Activated naive CD4-positive, alpha-beta T cell treated with anti-CD3 and anti-CD28 coated beads, Interleukin-2, amount 10 ng/mL, durations not matched to agents 7 days and 5 days (primary cell): ENCODE measurements at regions of chr5 and their contacts with region 1.

Region 1: DNA sequence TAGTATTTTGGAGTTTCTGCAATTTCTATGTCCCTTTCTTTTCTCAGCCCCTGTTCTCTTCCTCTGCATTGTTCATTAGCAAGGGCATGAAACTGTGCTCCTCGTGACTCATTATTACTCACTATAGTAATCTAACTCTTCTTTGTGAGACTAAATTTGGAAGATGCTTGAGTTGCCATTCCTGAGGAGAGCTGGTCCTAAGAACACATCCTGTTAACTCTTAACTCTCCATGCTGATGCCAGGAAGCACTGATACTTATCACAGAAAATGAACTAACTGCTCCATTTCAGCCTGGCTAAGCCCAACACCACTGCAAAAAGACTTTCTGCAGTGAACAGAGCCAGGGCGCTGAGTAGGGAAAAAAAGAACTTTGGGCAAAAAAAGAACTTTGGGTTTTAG is 10.6 kb upstream of the CSNK1A1 start:
- DNase-seq: no peak
- H3K4me3 Mint-ChIP-seq: no peak overlapping the region
- H3K27ac Mint-ChIP-seq: no peak overlapping the region
- H3K4me1 Mint-ChIP-seq: peaks cover 30% of the 10 kb centered on the region
- H3K27me3 Mint-ChIP-seq: no peaks in the 10 kb centered on the region

Region 2: GRCh38 chr5:149367249-149367971 is 194.4 kb before region 1 on chr5:
- CTCF ChIA-PET with region 1: interaction called, 15 read pairs
- DNase-seq: peak; percentile 69
- H3K4me3 Mint-ChIP-seq: no peak overlapping the region
- H3K27ac Mint-ChIP-seq: peak overlapping the region; percentile 60
- H3K4me1 Mint-ChIP-seq: peaks cover 6% of the 10 kb centered on the region
- H3K27me3 Mint-ChIP-seq: no peaks in the 10 kb centered on the region

Region 3: GRCh38 chr5:149434162-149435014 is 127.5 kb before region 1 on chr5:
- CTCF ChIA-PET with region 1: interaction called, 21 read pairs
- DNase-seq: peak; percentile 67
- H3K4me3 Mint-ChIP-seq: no peak overlapping the region
- H3K27ac Mint-ChIP-seq: no peak overlapping the region
- H3K4me1 Mint-ChIP-seq: peaks cover 25% of the 10 kb centered on the region
- H3K27me3 Mint-ChIP-seq: peaks cover 31% of the 10 kb centered on the region

Region 4: DNA sequence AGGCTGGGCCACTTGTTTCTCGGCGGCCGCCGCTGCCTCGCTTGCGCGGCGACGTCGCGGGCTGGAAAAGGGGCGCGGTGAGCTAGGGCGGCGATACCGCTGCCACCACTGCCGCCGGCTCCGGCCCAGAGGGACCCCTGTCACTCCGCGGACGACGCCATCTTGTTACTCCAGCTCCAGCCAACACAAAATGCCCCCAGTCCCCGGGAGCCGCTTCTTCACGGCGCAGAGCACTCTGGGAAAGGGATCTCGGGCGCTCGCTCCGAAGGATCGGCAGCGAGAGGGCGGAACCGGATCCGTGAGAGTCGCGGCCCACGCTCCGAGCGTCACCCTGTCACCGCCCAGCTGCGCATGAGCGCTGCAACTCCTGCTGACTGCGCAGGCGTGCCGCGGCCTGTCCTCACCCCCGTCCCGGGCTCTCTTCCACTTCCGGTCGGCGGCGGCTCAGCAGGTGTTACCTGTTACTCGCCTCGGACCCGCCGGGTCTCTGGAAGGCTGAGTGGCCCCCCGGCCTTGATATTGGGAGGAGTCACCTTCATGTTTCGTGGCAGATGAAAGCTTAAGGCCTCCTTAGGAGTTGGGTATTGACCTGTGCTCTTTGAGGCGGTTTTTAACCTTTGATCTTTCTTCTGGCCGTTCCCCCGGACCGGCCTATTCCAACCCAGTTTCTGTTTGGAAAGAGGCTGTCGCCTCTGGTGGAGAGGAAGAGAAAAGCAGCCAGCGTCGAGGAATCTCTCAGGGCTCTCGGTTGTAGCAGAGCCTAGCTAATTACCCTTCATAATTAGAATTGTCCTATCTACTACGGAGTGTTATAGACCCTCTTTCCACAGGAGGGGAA is 10.4 kb before region 1 on chr5 and contains the start of gene CSNK1A1:
- CTCF ChIA-PET with region 1: interaction called, 24 read pairs
- DNase-seq: peak; percentile 99
- H3K4me3 Mint-ChIP-seq: peak within 1 kb of the TSS; percentile 95
- H3K27ac Mint-ChIP-seq: peak within 1 kb of the TSS; percentile 97
- H3K4me1 Mint-ChIP-seq: peaks cover 36% of the 10 kb centered on the region
- H3K27me3 Mint-ChIP-seq: peaks cover 4% of the 10 kb centered on the region

Region 5: GRCh38 chr5:149618581-149619251 is 56.9 kb after region 1 on chr5:
- CTCF ChIA-PET with region 1: interaction called, 13 read pairs
- DNase-seq: peak; percentile 48
- H3K4me3 Mint-ChIP-seq: no peak overlapping the region
- H3K27ac Mint-ChIP-seq: no peak overlapping the region
- H3K4me1 Mint-ChIP-seq: no peaks in the 10 kb centered on the region
- H3K27me3 Mint-ChIP-seq: peaks cover 4% of the 10 kb centered on the region

Region 6: GRCh38 chr5:149702934-149703646 is 141.2 kb after region 1 on chr5:
- CTCF ChIA-PET with region 1: no interaction called
- DNase-seq: no peak
- H3K4me3 Mint-ChIP-seq: no peak overlapping the region
- H3K27ac Mint-ChIP-seq: no peak overlapping the region
- H3K4me1 Mint-ChIP-seq: no peaks in the 10 kb centered on the region
- H3K27me3 Mint-ChIP-seq: peaks cover 35% of the 10 kb centered on the region